PC-9 (cell line): ENCODE measurements at regions of chr5 and their contacts with region 1.

Region 1: GRCh38 chr5:140926443-140927227 is 536 bp downstream of the PCDHAC1 start:
- DNase-seq: peak; percentile 49 to 88
- H3K4me3 ChIP-seq: peak overlapping the region; percentile 35; the same call in 1 of the 2 replicates
- H3K27ac ChIP-seq: no peak overlapping the region
- H3K4me1 ChIP-seq: no peaks in the 10 kb centered on the region
- H3K27me3 ChIP-seq: no peaks in the 10 kb centered on the region
- CTCF ChIP-seq: peak; percentile 62

Region 2: DNA sequence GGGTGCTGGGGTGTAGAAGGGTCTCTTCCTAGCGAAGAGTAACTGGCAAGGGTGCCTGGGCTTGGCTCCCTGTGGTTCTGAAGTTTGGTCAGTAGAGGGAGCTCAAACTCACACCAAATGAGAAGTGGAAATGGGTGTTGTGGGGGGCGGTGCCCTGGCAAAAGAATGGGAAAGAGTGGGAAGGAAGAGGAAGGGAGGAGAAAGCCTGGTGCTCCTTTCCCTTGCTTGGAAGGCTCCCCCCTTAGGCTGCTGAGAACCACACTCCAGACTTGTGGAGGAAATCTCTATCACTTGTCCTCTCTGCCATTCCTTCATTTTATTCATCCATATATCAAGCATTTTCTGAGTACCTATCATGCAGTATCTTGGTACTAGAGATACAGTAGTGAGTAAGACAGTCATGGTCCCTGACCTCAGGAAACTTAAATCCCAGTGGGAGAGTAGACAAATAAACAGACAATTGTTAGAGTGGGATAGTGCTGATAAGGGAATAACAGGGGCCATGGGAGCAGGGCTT is 553.6 kb before region 1 on chr5:
- CTCF ChIA-PET with region 1: no interaction called
- POLR2A ChIA-PET with region 1: no interaction called
- intact Hi-C with region 1: no loop called
- DNase-seq: peak; percentile 56 to 58
- H3K4me3 ChIP-seq: no peak overlapping the region
- H3K27ac ChIP-seq: no peak overlapping the region
- H3K4me1 ChIP-seq: no peaks in the 10 kb centered on the region
- H3K27me3 ChIP-seq: no peaks in the 10 kb centered on the region
- CTCF ChIP-seq: peak; percentile 86

Region 3: DNA sequence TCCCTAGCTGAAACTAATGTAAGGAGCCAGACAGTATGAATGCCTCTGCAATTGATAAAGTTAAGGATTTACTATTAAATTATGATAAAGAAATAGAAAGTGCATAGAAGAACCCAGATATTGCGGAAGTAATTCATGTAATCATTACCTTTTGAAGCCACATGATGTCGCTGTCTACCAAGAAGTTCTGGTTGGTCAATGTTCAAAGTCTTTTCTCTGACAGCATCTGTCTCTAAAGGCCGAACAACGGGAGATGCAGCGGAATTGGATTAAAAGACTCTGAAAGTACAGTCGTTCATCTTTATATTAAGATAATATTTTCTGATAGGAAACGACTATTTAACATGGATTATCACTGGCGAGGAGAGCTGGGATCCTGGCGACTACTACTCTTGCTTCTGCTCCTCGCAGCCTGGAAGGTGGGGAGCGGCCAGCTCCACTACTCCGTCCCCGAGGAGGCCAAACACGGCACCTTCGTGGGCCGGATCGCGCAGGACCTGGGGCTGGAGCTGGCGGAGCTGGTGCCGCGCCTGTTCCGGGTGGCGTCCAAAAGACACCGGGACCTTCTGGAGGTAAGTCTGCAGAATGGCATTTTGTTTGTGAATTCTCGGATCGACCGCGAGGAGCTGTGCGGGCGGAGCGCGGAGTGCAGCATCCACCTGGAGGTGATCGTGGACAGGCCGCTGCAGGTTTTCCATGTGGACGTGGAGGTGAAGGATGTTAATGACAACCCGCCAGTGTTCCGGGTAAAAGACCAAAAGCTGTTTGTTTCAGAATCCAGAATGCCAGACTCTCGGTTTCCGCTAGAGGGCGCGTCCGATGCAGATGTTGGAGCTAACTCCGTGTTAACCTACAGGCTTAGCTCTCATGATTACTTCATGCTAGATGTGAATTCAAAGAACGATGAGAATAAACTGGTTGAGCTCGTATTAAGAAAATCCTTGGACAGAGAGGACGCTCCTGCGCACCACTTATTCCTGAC is 85.4 kb before region 1 on chr5 and contains the start of gene PCDHA8:
- CTCF ChIA-PET with region 1: no interaction called
- POLR2A ChIA-PET with region 1: no interaction called
- intact Hi-C with region 1: no loop called
- DNase-seq: peak in 1 of 2 experiments; percentile 13
- H3K4me3 ChIP-seq: no peak within 1 kb of the TSS
- H3K27ac ChIP-seq: no peak within 1 kb of the TSS
- H3K4me1 ChIP-seq: no peaks in the 10 kb centered on the region
- H3K27me3 ChIP-seq: no peaks in the 10 kb centered on the region
- CTCF ChIP-seq: peak; percentile 43
- total RNA-seq, gene PCDHA8: not detected in 2 replicates

Region 4: GRCh38 chr5:140868721-140869554 is 57.7 kb before region 1 on chr5 and contains the start of gene PCDHA11:
- CTCF ChIA-PET with region 1: no interaction called
- POLR2A ChIA-PET with region 1: no interaction called
- intact Hi-C with region 1: loop called (anchors 2 kb)
- DNase-seq: no peak
- H3K4me3 ChIP-seq: no peak within 1 kb of the TSS
- H3K27ac ChIP-seq: no peak within 1 kb of the TSS
- H3K4me1 ChIP-seq: no peaks in the 10 kb centered on the region
- H3K27me3 ChIP-seq: no peaks in the 10 kb centered on the region
- CTCF ChIP-seq: peak; percentile 44; the same call in 1 of the 2 replicates
- total RNA-seq, gene PCDHA11: not detected in 2 replicates

Region 5: DNA sequence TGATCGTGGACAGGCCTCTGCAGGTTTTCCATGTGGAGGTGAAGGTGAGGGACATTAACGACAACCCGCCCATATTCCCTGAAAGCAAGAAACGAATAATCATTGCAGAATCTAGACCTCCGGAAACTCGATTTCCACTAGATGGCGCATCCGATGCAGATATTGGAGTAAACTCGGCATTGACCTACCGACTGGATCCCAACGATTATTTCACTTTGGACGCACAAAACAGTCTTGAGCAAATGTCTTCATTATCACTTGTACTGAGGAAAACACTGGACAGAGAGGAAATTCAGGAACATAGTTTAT is 44.1 kb before region 1 on chr5:
- CTCF ChIA-PET with region 1: no interaction called
- POLR2A ChIA-PET with region 1: no interaction called
- intact Hi-C with region 1: loop called (anchors 5 kb)
- DNase-seq: no peak
- H3K4me3 ChIP-seq: no peak overlapping the region
- H3K27ac ChIP-seq: no peak overlapping the region
- H3K4me1 ChIP-seq: no peaks in the 10 kb centered on the region
- H3K27me3 ChIP-seq: 0 out of 2 replicates have a peak, but pooled peaks cover under 1% of the 10 kb centered on the region
- CTCF ChIP-seq: 0 out of 2 replicates have a peak, but pooled peaks have one; percentile 26

Region 6: DNA sequence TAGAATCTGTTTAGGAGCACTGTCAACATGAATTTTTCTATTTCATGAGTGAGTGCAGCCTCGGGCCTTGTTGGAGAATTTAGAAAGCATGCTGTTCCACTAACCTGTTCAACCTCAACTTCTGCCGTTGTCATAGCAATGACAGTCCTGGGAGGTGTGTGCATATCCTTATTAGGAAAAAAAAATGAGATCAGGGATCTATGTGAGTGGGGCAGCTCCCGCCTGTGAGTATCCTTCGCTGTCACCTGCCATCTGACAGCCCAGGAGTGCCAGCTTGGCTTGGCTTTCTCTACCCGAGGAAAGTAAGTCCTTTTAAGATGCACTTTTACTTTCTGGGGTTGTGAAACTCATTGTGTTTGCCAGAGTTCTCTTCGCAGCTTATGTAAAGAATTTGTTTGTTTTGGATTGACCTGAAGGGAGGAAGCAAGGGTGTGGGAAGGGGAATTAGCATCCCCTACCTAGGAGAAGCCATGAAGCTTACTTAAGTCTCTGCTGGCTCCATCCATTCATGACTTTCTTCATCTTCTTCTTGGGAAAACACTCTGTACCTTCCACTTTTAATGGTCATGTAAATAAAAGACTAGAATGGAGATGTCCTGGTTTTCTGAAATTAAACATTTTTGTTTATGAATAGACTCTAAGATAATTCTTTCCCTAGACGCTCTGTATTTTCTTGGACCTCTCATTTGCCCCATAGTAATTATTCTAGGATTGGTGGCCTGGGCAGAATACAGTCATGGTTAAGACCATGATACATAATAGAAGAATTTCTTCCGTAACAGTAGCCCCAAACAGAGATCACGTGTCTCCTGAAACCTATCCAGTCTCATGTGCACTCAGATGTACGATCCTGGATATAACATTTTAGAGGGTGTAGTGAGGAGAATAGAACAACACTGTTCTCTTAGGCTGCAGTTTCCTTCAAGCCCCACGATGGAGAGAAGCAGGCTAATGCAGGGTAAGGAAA is 61.7 kb after region 1 on chr5:
- CTCF ChIA-PET with region 1: no interaction called
- POLR2A ChIA-PET with region 1: no interaction called
- intact Hi-C with region 1: loop called (anchors 5 kb)
- DNase-seq: peak; percentile 33 to 68
- H3K4me3 ChIP-seq: no peak overlapping the region
- H3K27ac ChIP-seq: peak overlapping the region; percentile 52
- H3K4me1 ChIP-seq: no peaks in the 10 kb centered on the region
- H3K27me3 ChIP-seq: no peaks in the 10 kb centered on the region
- CTCF ChIP-seq: no peak

Region 7: DNA sequence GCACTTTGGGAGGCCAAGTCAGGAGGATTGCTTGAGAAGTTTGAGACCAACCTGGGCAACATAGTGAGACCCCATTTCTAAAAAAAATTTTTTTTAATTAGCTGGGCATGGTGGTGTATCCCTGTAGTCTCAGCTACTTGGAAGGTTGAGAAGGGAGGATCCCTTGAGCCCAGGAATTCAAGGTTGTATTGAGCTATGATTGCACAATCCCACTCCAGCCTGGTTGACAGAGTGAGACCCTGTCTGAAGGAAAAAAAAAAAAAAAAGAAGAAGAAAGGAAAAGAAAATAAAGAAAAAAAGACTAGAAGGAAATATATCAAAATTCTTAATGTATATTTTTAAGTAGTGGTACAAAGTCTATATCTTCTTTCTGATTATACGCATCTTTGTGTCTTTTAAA is 95.7 kb after region 1 on chr5:
- CTCF ChIA-PET with region 1: no interaction called
- POLR2A ChIA-PET with region 1: no interaction called
- intact Hi-C with region 1: no loop called
- DNase-seq: no peak
- H3K4me3 ChIP-seq: no peak overlapping the region
- H3K27ac ChIP-seq: no peak overlapping the region
- H3K4me1 ChIP-seq: no peaks in the 10 kb centered on the region
- H3K27me3 ChIP-seq: no peaks in the 10 kb centered on the region
- CTCF ChIP-seq: no peak